Cardiac septum (tissue), 1 donor: ENCODE measurements at regions of chr3 and their contacts with region 1.

Region 1: GRCh38 chr3:180912304-180913296 is at the start of gene FXR1:
- DNase-seq: peak; percentile 96
- total RNA-seq, gene FXR1: 205 TPM

Region 2: DNA sequence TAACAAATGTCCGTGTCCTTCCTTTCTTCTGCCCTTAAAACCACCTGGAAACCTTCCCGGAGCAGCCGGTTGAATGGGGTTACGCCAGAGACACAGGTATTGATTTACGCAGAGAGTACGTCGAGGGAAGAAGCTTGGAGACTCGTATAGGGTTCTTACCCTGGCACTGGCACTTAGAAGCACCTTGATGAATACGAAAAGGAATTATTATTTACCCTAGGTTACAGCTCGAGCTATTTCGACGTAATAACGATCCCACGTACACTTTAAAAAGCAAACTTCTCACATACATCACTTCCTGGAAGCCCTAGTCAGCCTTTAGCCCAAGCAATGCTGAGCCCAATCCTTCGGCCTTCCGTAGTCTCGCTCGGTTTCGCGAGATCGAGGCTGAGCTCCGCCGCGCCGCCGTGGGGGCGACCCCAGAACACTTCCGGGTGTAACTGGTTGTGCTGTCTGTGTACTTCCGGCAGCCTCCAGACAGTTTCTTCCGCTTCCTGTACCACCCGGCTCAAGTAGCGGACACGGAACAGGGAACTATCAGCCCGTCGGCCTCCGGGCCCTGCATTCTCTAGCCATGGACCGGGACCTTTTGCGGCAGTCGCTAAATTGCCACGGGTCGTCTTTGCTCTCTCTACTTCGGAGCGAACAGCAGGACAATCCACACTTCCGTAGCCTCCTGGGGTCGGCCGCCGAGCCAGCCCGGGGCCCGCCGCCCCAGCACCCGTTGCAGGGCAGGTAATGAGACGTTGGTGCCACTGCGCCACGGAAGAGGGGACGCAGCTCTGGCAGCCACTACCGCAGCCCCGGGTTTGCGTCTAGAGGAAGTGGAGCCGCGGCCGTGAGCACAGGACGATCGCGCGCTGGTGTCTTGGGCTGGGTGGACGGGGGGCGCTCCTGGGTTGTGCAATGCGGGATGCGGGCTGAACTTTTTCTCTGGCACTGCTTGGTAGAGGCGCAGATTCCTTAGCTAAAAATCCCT is 310.6 kb before region 1 on chr3 and contains the start of gene TTC14:
- intact Hi-C with region 1: loop called (anchors 10 kb)
- DNase-seq: peak; percentile 96
- total RNA-seq, gene TTC14: 18.5 TPM

Region 3: GRCh38 chr3:180989291-180990163 is 76.9 kb after region 1 on chr3 and contains the start of gene DNAJC19:
- intact Hi-C with region 1: loop called (anchors 1 kb)
- DNase-seq: peak; percentile 95
- total RNA-seq, gene DNAJC19: 62.2 TPM

Region 4: DNA sequence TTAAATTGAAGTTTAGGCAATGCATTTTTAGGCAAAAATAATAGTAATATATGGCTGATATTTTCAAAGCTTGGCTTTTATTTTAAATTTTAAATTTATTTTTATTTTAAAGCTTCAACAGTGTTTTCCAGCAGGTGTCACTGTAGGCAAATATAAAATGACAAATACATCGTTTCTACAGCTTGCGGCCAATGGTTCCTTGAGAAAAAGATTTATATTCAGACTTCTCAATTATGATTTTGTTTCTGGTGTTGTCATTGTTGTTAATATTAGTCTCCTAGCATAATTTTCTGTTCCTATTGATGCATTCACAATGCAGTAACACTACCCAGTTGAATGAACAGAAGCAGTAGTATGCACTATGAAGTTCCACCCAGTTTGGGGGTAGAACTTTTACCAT is 297.7 kb after region 1 on chr3:
- intact Hi-C with region 1: no loop called
- DNase-seq: no peak